ENCODE measurements at regions of chr20 and their contacts with region 1.

Region 1: DNA sequence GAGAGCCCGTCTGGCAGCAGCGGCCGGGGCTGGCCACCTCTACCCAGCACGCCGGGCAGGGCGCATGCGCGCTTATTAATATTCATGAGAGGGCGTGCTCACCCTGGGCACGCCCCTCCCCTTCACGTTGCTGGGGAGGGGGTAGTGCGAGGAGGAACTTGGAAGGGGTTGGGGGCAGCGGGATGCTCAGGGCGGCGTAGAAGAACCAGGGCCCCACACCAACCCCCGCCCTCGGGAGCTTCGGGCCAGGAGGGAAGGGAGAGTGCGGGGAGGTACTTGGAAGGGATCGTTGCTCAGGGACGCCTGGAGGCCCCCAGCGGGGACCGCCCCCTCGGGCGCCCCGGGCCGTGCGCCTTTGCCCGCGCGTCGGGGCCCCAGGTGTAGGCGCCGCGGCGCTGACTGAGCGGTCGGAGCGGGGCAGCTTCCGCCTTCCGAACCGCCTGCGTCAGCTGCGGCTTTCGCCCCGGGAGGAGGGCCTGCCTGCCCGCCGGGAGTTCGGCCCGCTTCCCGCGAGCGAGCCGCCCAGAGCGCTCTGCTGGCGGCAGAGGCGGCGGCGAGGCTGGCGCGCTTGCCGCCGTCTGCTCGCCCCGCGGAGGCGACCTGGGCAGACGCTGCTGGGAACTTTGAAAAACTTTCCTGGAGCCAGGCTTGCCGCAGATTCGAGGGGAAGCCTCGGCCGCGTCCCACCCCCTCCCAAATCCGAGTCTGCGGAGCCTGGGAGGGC is at the start of gene JAG1:
- DNase-seq: peak; percentile 95
- ATAC-seq: peak; percentile 71
- H3K4me3 Mint-ChIP-seq: peak within 1 kb of the TSS; percentile 94
- H3K27ac Mint-ChIP-seq: peak within 1 kb of the TSS; percentile 98
- H3K4me1 Mint-ChIP-seq: peaks cover 38% of the 10 kb centered on the region
- H3K27me3 Mint-ChIP-seq: no peaks in the 10 kb centered on the region
- CTCF ChIP-seq: no peak
- total RNA-seq, gene JAG1: 38.3 to 45.2 TPM (median 41.6 TPM) in 3 replicates

Region 2: DNA sequence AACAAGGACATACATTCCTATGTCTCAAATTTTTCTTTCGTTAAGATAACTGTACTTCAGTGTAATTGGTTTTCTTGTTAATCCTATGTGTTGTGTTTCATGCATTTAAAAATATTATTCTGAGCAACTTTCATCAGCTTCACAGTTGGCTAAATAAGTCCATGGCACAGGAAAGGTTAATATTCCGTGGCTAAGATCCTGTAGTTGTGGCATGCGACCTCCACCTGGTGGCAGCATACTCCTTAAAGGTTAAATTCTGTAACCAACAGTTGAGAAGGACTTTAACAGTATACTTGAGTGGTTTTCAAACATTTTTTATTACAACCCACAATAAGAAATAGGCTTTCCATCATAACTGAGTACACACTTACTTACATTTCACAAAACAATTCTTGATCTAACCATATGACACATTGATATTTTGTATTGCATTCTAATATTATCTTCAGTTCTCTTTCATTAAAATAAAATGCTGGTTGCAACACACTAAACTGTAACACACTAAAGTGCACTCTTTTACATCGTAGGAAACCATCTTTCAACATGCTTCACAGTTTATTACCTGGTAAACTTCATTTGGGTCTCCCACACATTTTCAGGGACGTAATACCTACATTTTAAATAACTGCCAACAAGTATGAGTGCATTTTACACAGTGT is 120.7 kb before region 1 on chr20:
- CTCF ChIA-PET with region 1: interaction called, 14 read pairs
- POLR2A ChIA-PET with region 1: interaction called, 4 read pairs
- DNase-seq: peak; percentile 64
- ATAC-seq: peak; percentile 49; the same call in 1 of the 2 replicates
- H3K4me3 Mint-ChIP-seq: no peak overlapping the region; the same call in 1 of the 2 replicates
- H3K27ac Mint-ChIP-seq: peak overlapping the region; percentile 74; the same call in 1 of the 2 replicates
- H3K4me1 Mint-ChIP-seq: peaks cover 75% of the 10 kb centered on the region
- H3K27me3 Mint-ChIP-seq: no peaks in the 10 kb centered on the region
- CTCF ChIP-seq: peak; percentile 31; the same call in 1 of the 2 replicates

Region 3: GRCh38 chr20:10686356-10687133 is 12.4 kb after region 1 on chr20:
- CTCF ChIA-PET with region 1: interaction called, 22 read pairs
- POLR2A ChIA-PET with region 1: no interaction called
- DNase-seq: no peak
- ATAC-seq: peak; percentile 36
- H3K4me3 Mint-ChIP-seq: no peak overlapping the region
- H3K27ac Mint-ChIP-seq: no peak overlapping the region
- H3K4me1 Mint-ChIP-seq: peaks cover 12% of the 10 kb centered on the region
- H3K27me3 Mint-ChIP-seq: no peaks in the 10 kb centered on the region
- CTCF ChIP-seq: no peak

Region 4: GRCh38 chr20:10970109-10970508 is 296.0 kb after region 1 on chr20:
- CTCF ChIA-PET with region 1: no interaction called
- POLR2A ChIA-PET with region 1: no interaction called
- DNase-seq: no peak
- ATAC-seq: no peak
- H3K4me3 Mint-ChIP-seq: no peak overlapping the region
- H3K27ac Mint-ChIP-seq: no peak overlapping the region
- H3K4me1 Mint-ChIP-seq: peaks cover 4% of the 10 kb centered on the region
- H3K27me3 Mint-ChIP-seq: no peaks in the 10 kb centered on the region
- CTCF ChIP-seq: no peak

Region 5: DNA sequence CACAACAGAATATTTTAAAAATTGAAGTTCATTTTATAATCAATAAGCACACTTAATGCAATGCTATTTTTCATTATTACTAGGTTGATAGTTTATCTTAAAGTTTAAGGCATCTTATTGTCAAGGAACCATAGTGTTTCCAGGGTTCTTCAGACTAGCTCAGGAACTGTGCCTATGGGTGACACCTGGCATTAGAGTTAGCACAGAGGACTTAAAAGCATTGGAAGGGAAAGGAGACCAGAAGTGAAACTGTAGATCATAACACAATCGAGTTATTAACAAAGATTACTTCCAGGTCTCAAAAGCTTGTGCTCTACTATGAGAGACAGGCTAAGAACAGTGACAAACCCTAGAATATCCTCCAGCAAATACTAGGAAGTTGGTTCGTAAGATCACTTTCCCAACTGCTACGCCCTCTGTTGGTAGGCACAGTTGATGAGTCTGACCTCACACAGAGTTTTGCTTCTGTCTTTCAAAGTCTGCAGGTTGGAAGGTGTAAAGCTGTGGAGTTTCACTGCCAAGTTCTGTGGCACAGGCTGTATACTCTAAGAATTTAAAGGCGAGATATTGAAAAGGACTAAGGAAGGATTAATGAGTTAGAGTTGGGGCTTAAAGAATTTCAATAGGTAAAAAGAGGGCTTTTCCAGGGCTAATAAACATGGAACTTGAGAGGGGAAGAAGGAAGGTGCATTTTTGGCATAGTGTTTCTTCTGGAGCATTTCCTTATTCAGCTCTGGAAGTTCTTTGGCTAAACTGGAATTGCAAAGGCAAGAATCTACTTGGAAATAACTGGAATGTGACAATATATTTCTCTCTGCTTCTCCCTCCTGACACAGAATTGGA is 531.0 kb after region 1 on chr20:
- CTCF ChIA-PET with region 1: interaction called, 13 read pairs
- POLR2A ChIA-PET with region 1: no interaction called
- DNase-seq: peak; percentile 72
- ATAC-seq: peak; percentile 97
- H3K4me3 Mint-ChIP-seq: no peak overlapping the region
- H3K27ac Mint-ChIP-seq: no peak overlapping the region
- H3K4me1 Mint-ChIP-seq: peaks cover 23% of the 10 kb centered on the region
- H3K27me3 Mint-ChIP-seq: no peaks in the 10 kb centered on the region
- CTCF ChIP-seq: peak; percentile 62; the same call in 1 of the 2 replicates